ENCODE measurements at regions of chr1 and their contacts with region 1.

Region 1: DNA sequence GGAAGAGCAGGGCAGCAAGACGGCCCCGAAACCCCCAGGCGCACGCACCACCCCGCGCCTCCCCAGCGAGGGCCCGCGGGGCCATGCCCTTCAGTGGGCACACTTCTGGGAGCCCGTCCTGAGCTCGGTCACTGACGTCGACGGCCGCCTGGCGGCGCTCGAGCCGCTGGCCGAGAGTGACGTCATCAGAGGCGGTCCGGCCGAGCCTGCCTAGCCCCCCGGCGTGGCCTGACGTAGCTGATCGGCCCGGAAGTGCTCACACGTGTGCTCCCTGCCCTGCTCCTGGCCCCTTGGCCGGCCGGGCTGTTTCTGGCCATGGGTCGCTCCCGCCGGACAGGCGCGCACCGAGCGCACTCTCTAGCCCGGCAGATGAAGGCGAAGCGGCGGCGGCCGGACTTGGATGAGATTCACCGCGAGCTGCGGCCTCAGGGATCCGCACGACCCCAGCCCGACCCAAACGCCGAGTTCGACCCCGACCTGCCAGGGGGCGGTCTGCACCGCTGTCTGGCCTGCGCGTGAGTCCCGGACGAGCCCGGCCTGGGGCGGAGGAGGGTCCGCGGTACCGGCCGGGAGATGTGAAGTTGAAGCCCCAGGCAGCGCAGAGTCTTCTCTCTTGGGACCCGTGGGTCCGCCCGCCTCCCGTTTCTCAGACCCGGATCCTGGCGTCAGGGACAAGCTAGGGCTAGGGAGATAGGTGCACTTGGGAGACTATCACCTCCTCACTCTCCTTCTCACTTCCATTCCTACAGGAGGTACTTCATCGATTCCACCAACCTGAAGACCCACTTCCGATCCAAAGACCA is at the start of gene ZNF593:
- DNase-seq: peak; percentile 94
- ATAC-seq: peak; percentile 88
- H3K4me3 Mint-ChIP-seq: peak within 1 kb of the TSS; percentile 92
- H3K27ac Mint-ChIP-seq: peak within 1 kb of the TSS; percentile 90
- H3K4me1 Mint-ChIP-seq: peaks cover 25% of the 10 kb centered on the region
- H3K27me3 Mint-ChIP-seq: peaks cover 9% of the 10 kb centered on the region
- total RNA-seq, gene ZNF593: 26.5 to 31.0 TPM

Region 2: GRCh38 chr1:26200413-26200812 is 30.5 kb after region 1 on chr1:
- POLR2A ChIA-PET with region 1: interaction called, 11 read pairs
- DNase-seq: no peak
- ATAC-seq: no peak
- H3K4me3 Mint-ChIP-seq: no peak overlapping the region
- H3K27ac Mint-ChIP-seq: peak overlapping the region; percentile 95
- H3K4me1 Mint-ChIP-seq: peaks cover 22% of the 10 kb centered on the region
- H3K27me3 Mint-ChIP-seq: peaks cover 4% of the 10 kb centered on the region

Region 3: GRCh38 chr1:26233903-26234643 is 64.2 kb after region 1 on chr1 and contains the start of gene CEP85:
- POLR2A ChIA-PET with region 1: interaction called, 21 read pairs
- DNase-seq: peak; percentile 97
- ATAC-seq: peak; percentile 94
- H3K4me3 Mint-ChIP-seq: peak within 1 kb of the TSS; percentile 100
- H3K27ac Mint-ChIP-seq: peak within 1 kb of the TSS; percentile 97
- H3K4me1 Mint-ChIP-seq: peaks cover 29% of the 10 kb centered on the region
- H3K27me3 Mint-ChIP-seq: no peaks in the 10 kb centered on the region
- total RNA-seq, gene CEP85: 36.0 to 37.2 TPM